Transverse colon (tissue), 4 donors: ENCODE measurements at regions of chr3 and their contacts with region 1.

Region 1: GRCh38 chr3:22284559-22284958 is 533.5 kb upstream of the ZNF385D start:
- DNase-seq: no peak
- H3K4me3 ChIP-seq: no peak overlapping the region
- H3K27ac ChIP-seq: no peak overlapping the region
- H3K4me1 ChIP-seq: no peaks in the 10 kb centered on the region
- H3K27me3 ChIP-seq: no peaks in the 10 kb centered on the region
- CTCF ChIP-seq: no peak
- EP300 ChIP-seq: no peak
- POLR2A ChIP-seq: no peak

Region 2: DNA sequence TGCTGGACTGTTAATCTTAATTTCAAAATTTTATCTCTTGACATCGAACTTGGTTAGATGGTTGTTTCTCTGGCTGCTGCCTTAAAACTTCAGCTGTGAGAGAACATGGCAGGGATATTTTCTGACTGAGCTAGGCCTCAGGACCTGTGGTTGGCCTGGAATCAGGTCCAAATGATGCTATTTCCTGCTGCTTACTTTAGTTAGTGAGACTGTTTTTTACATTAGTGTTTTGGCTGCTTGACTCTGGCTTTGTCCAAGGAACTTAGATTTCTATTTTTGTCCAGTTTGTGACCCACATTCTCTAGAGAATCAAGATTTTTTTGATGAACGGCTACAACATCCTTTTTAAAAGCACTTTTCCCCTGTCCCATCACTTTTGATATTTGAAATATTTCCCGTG is 1600.6 kb before region 1 on chr3:
- in situ Hi-C with region 1: no loop called
- intact Hi-C with region 1: loop called (anchors 5 kb)
- DNase-seq: no peak
- H3K4me3 ChIP-seq: no peak overlapping the region
- H3K27ac ChIP-seq: no peak overlapping the region
- H3K4me1 ChIP-seq: no peaks in the 10 kb centered on the region
- H3K27me3 ChIP-seq: no peaks in the 10 kb centered on the region
- CTCF ChIP-seq: no peak
- EP300 ChIP-seq: no peak
- POLR2A ChIP-seq: no peak

Region 3: DNA sequence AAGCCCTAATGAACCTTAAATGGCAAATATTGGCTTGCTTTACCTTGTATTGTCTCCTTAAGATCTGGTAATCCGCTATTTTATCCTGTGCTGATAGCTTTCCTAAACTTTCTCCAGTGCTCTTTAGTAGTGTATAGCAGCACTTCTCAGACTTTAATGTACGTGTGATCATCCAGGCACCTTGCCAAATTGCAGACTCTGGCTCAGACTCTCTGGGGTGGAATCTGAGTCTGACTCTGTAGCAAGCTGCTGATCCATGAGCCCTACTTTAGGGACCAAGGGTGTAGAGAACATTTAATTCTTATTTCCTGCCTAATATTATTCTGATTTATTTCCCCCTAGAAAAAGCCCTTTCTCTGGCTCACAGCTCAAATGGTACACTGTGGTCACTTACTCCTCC is 14.7 kb before region 1 on chr3:
- in situ Hi-C with region 1: no loop called
- intact Hi-C with region 1: no loop called
- DNase-seq: no peak
- H3K4me3 ChIP-seq: no peak overlapping the region
- H3K27ac ChIP-seq: no peak overlapping the region
- H3K4me1 ChIP-seq: no peaks in the 10 kb centered on the region
- H3K27me3 ChIP-seq: no peaks in the 10 kb centered on the region
- CTCF ChIP-seq: no peak
- EP300 ChIP-seq: no peak
- POLR2A ChIP-seq: no peak

Region 4: DNA sequence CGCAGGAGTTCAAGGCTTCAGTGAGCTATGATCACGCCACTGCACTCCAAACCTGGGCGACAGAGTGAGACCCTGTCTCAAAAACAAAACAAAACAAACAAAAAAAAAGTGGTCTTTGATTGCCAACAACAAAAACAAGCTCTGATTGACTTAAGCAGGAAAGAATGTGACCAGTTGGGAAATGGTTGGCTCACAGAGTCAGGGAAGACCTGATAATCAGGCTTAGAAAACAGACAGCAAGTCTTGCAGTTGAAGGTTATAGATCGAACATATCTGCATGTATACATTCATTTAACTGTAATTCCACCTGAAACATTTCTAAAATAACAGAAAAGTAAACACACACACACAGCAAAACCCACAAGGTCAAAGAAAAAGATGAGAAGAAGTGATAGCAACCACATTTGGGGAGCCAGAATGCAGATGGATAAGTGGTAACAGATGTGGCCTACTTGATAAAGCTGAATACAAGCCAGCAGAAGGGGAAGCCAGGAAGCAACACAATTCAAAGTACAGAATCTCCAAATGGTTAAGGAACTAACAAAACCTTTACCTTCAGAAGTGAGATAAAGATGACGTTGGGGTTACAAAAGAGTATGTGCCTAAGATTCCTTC is 166.3 kb after region 1 on chr3:
- in situ Hi-C with region 1: no loop called
- intact Hi-C with region 1: no loop called
- DNase-seq: no peak
- H3K4me3 ChIP-seq: no peak overlapping the region
- H3K27ac ChIP-seq: no peak overlapping the region
- H3K4me1 ChIP-seq: no peaks in the 10 kb centered on the region
- H3K27me3 ChIP-seq: no peaks in the 10 kb centered on the region
- CTCF ChIP-seq: no peak
- EP300 ChIP-seq: no peak
- POLR2A ChIP-seq: no peak